GM10248 (cell line): ENCODE measurements at regions of chr11 and their contacts with region 1.

Region 1: DNA sequence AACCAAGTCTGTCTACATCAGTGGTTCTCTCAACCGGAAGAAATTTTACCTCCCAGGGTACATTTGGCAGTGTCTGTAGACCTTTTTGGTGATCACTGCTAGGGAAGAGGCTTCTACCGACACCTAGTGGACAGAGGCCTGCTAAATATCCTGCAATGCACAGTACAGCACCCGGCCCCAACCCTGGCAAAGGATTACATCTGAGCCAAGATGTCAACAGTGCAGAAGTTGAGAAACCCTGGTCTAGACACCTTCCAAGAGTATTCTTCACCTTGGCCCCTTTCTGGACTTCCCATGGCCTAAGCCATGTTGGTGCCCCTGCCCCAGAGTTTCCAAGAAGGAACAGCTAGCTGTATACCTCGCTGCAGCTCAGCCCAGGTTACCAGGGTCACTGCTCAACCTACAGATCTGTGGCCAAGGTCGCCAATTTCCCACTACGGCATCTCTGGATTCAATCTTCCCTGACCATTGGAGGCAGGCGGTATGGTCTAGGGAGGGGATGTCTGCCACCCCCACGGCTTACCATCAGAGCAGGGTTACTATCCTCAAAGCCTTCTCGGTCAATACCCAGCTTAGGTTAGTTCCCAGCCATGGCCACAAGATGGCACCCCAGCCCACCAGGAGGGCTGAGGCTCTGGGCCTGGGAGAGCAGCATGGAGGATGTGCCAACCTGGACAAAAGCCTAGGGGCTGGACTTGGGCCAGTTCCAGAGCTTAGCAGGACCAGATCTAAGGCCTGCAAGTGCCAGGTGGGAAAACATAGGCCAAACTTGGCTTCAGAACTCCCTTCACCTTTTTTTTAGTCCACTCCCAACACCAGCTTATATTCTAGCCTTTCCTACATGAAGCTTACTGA is 3.7 kb upstream of the KCNC1 start:
- DNase-seq: peak; percentile 84
- CTCF ChIP-seq: peak; percentile 93

Region 2: DNA sequence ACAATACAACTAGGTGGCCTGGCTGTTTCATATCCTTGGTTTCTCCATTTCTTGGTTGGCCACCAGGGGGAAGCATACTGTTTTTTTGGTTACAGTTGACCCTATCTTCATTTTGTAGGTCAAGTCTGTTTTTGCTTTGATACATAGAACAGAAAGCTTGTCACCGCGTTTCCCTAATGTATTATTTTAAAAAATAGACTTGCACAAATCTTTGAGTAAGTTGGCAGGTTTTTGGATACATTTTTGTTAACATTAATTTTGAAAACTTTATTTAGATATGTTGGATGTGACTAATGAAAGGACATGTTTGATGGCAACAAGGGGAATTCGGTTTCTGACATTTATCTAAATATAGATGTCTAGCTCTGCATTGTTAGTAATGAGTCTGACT is 376.2 kb before region 1 on chr11:
- CTCF ChIA-PET with region 1: no interaction called
- POLR2A ChIA-PET with region 1: no interaction called
- DNase-seq: peak; percentile 69
- CTCF ChIP-seq: peak; percentile 60

Region 3: GRCh38 chr11:17691976-17692375 is 38.9 kb before region 1 on chr11:
- CTCF ChIA-PET with region 1: no interaction called
- POLR2A ChIA-PET with region 1: no interaction called
- DNase-seq: no peak
- CTCF ChIP-seq: no peak

Region 4: GRCh38 chr11:17703951-17704350 is 26.9 kb before region 1 on chr11:
- CTCF ChIA-PET with region 1: interaction called, 15 read pairs
- POLR2A ChIA-PET with region 1: no interaction called
- DNase-seq: no peak
- CTCF ChIP-seq: no peak

Region 5: DNA sequence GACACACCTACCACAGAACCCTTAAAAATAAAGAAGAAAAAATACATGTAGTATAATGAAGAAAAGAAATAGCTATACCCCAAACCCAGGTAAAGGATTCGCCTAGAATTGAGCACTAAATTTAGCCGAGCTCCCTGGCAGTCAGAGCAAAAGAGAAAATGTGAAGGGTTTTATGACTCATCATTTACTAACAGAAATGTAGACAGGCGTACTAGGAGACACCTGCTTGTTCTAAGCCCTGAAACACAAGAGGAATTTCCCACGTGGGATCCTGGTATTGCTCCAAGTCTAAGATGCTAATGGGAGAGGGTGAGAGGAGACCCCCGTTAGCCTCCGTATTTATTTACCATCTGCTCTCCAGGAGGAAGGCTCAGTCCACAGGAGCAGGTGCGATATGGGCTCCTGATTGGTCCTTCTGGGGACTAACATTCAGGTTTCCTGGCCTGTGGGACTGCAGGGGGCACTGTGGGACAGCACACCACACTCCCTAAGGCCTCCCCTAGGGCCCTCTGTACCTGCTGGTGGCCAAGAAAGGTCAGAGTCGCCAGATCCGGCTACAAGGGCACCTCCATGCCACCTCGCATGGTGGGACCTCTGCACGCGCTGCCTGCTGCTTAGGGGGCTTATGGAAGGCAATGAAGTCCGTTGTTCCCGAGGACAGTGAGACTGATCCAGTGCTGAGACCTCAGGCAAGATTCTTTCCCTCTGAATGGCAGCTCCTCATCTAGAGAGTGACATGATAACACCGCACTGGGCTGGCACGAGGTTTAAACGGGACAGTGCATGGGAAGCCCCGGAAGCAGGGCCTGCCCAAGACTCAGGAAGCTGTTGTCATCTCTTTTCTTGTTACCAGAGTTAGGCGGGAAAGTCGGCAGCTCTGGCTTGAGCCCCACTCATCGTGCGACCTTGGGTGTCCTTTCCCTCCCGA is 29.5 kb after region 1 on chr11:
- CTCF ChIA-PET with region 1: interaction called, 12 read pairs
- POLR2A ChIA-PET with region 1: no interaction called
- DNase-seq: peak; percentile 76
- CTCF ChIP-seq: peak; percentile 53

Region 6: DNA sequence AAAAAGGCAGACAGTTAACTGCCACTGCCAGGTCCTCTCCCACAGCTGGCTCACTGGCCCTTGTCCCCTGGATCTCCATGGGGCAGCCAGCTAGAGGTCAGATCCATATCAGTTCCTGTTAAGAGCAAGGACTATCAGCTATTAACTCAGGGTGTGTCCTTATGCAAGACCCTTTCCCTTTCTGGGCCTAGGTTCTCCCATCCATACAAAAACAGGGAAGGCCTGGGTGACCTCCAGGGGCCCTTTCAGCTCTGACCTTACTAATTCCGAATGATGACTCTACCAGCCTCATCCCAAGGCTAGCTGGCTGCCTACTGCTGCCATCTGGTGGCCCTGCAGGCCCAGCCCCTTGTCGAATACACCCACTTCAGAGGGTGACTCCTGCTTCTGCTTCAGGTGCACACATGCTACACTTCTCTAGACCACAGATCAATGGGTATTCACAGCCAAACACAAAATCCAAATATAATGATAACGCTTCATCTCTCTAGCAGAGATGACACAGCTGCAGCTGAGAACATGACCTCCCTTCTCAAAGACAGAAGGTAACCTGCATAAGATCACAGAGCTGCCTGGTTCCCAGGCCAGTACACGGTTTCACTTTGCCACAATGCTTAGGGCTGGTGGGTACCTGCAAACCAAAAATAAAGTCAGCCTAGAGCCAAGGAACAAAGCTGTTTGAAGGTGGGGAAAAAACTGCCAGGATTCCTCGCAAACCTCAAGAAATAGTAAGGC is 247.9 kb after region 1 on chr11:
- CTCF ChIA-PET with region 1: interaction called, 290 read pairs
- POLR2A ChIA-PET with region 1: no interaction called
- DNase-seq: peak; percentile 49
- CTCF ChIP-seq: peak; percentile 68

Region 7: GRCh38 chr11:17991783-17992433 is 261.1 kb after region 1 on chr11:
- CTCF ChIA-PET with region 1: interaction called, 20 read pairs
- POLR2A ChIA-PET with region 1: no interaction called
- DNase-seq: peak; percentile 69
- CTCF ChIP-seq: peak; percentile 66